Activated B cell treated with CpG ODN at 0.5 μM for 24 hours (primary cell): ENCODE measurements at regions of chr3 and their contacts with region 1.

Region 1: DNA sequence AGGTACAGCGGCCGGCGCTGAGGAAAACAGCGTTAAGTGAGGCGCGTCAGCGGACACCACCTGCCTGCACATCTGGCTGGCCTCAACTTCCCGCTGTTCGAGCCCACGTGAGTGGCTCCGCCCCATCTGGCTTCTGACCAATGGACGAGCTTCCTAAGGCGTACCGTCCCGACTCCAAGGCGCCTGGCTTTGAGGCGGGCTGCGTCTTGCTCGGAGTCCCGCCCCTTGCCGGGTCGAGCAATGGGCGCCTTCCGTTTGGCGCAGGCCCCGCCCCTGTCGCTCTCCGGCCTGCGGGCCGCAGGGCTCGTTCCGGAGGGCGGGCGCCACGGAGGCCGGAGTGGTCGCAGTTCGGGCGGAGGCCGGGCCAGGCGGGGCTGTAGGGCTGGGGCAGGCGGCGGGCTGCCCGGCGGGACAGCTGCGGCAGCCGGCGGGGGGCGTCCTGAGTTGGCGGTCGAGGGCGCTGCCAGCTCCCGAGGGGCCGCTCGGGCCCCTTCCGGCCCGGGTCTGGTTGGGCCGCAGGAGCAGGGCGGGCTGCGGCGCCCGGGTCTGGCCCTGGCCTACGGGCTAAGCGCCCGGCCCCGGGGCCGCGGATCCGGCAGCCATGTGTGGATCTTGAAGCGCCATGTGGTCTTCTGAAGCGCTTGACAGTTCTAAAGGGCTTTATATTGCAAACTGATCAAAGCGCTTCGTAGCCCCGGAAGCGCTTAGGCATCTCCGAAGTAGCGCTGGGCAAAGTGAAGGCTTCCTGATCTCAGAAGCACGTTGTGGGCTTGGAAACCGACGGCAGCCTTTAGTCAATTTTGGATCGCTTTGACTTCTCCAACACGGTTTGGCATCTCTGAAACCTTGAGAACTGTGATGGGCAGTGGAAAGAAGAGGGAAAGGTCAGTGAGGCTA is at the start of gene TATDN2:
- DNase-seq: peak; percentile 88
- ATAC-seq: peak; percentile 97
- H3K4me3 Mint-ChIP-seq: peak within 1 kb of the TSS; percentile 95
- H3K27ac Mint-ChIP-seq: peak within 1 kb of the TSS; percentile 91
- H3K4me1 Mint-ChIP-seq: peaks cover 39% of the 10 kb centered on the region
- H3K27me3 Mint-ChIP-seq: no peaks in the 10 kb centered on the region
- CTCF ChIP-seq: no peak
- total RNA-seq, gene TATDN2: 55.6 and 56.2 TPM in 2 replicates

Region 2: GRCh38 chr3:9792405-9793160 is 455.8 kb before region 1 on chr3 and contains the starts of genes ARPC4 and TADA3:
- CTCF ChIA-PET with region 1: no interaction called
- POLR2A ChIA-PET with region 1: interaction called, 7 read pairs
- intact Hi-C with region 1: loop called (anchors 1 kb)
- DNase-seq: peak; percentile 92
- ATAC-seq: peak; percentile 75
- H3K4me3 Mint-ChIP-seq: peak within 1 kb of the TSS; percentile 99
- H3K27ac Mint-ChIP-seq: peak within 1 kb of the TSS; percentile 100
- H3K4me1 Mint-ChIP-seq: peaks cover 67% of the 10 kb centered on the region
- H3K27me3 Mint-ChIP-seq: no peaks in the 10 kb centered on the region
- CTCF ChIP-seq: no peak
- total RNA-seq, gene ARPC4: 315 and 338 TPM in 2 replicates
- total RNA-seq, gene TADA3: 43.8 and 44.7 TPM in 2 replicates

Region 3: DNA sequence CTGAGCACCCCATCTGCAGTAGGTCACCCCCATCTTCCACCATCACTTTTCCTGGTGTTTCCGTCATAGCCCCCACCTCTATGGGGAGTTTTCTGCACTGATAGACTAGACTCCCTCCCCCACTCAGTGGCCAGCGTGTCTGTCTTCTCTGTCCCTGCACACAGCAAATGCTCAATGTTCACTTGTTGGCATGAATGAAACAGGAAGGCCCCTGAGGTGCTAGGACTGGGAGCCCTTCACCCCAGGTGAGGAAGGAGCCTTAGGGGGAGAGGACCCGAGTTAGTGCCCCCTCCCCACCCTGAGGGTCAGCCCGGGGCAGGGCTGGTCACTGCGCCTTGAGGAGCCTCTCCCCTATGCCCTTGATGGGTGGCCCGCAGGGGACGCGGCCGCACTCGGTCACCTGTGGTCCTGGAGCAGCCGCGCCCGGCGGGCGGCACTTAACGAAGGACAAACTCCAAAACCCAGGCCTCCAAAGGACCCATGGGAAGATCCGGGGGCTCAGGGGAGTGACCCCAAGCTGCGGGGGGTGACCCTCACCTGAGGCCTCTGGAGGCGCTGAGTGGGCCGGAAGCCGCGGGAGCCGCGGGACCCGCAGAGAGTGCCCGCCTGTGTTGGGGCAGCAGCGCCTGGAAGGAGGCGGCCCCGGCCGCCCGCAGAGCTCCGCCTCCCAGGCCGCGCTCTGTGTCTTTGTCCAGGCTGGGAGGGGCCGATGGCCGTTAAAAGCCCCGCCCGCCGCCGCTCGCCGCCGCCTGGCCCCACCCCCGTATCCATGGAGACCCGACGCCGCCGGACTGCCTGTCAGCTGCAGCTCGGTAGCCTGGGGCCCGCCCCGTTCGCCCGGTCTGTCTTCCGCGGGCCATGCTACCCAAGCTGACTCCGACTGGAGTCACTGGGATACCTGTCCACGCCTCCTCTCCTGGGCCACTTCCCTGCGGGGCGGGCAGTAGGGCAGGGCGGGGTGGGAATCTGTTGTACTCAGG is 237.7 kb before region 1 on chr3:
- CTCF ChIA-PET with region 1: no interaction called
- POLR2A ChIA-PET with region 1: interaction called, 3 read pairs
- intact Hi-C with region 1: loop called (anchors 5 kb)
- DNase-seq: peak; percentile 86
- ATAC-seq: peak; percentile 86
- H3K4me3 Mint-ChIP-seq: peak overlapping the region; percentile 65
- H3K27ac Mint-ChIP-seq: peak overlapping the region; percentile 1
- H3K4me1 Mint-ChIP-seq: peaks cover 23% of the 10 kb centered on the region
- H3K27me3 Mint-ChIP-seq: no peaks in the 10 kb centered on the region
- CTCF ChIP-seq: no peak

Region 4: DNA sequence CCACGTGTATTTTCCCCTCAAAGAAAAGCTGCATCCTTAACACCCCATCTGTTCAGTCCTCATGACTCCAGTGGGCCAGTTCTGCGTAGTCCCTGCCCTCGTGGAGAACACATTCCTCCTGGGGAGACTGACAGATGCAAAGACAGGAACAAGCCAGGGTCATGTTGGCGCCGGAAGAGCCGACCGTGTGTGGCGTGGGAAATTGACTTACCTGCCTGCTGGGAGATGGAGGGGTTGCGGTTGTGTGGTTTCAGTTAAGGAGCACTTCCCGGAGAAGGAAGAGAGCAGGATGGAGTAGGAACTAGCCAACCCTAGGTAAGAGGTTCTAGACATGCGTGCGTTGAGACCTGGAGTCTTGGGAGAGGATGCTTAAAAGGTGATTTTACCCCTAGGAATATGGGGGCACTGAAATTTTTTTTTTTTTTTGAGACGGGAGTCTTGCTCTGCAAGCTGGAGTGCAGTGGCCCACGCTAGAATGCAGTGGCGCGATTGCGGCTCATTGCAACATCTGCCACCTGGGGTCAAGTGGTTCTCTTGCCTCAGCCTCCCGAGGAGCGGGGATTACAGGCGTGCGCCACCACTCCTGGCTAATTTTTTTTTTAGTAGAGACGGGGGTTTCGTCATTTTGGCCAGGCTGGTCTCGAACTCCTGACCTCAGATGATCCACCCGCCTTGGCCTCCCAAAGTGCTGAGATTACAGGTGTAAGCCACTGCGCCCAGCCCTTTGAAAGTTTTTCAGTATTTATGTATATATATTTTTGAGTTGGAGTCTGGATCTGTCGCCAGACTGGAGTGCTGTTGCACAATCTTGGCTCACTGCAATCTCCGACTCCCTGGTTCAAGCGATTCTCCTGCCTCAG is 105.5 kb before region 1 on chr3:
- CTCF ChIA-PET with region 1: no interaction called
- POLR2A ChIA-PET with region 1: interaction called, 17 read pairs
- intact Hi-C with region 1: loop called (anchors 1 kb)
- DNase-seq: no peak
- ATAC-seq: no peak
- H3K4me3 Mint-ChIP-seq: peak overlapping the region; percentile 97
- H3K27ac Mint-ChIP-seq: peak overlapping the region; percentile 95
- H3K4me1 Mint-ChIP-seq: peaks cover 42% of the 10 kb centered on the region
- H3K27me3 Mint-ChIP-seq: no peaks in the 10 kb centered on the region
- CTCF ChIP-seq: no peak

Region 5: DNA sequence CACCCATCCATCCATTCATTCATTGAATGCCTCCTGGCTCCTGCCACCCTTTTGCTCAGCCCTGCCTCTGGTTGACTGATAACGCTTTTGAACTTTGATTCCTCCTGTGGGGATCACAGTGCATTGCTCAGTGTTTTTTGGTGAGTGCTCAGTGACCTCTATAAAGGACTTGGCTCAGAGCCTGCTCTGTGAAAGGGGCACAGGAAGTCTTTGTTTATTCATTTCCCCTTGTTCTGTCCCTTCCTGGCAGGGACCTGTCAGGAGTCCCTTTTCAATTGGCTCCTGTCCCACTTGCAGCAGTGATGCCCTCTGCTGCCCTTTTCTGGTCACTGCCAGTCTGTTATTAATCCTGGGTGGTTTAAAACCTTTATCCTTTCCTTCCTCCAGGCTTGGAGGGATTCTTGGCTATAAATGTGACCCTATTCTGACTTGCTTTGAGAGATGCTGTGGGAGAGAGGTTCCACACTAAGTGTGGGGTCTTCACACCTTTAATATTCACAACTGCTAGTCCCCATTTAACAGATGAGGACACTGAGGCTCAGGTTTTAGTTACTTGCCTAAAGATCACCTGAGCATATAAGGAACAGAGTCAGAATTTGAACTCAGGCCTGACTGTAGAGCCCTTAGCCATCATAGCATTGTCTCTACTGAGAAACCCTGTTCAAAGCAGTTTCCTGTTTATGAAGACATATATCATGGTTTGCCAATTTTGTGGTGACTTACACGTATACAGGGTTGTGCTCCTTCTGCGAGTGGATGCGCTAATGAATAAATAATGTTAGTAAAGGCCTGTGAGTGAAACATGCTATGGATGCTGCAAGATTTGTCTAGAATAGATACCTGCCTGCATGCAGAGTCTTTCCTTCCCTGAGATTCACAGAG is 23.4 kb before region 1 on chr3:
- CTCF ChIA-PET with region 1: interaction called, 4 read pairs
- POLR2A ChIA-PET with region 1: interaction called, 12 read pairs
- intact Hi-C with region 1: no loop called
- DNase-seq: peak; percentile 32
- ATAC-seq: peak; percentile 63
- H3K4me3 Mint-ChIP-seq: peak overlapping the region; percentile 48
- H3K27ac Mint-ChIP-seq: peak overlapping the region; percentile 61
- H3K4me1 Mint-ChIP-seq: peaks cover 65% of the 10 kb centered on the region
- H3K27me3 Mint-ChIP-seq: no peaks in the 10 kb centered on the region
- CTCF ChIP-seq: peak; percentile 85

Region 6: GRCh38 chr3:10609134-10609533 is 360.7 kb after region 1 on chr3:
- CTCF ChIA-PET with region 1: no interaction called
- POLR2A ChIA-PET with region 1: no interaction called
- intact Hi-C with region 1: no loop called
- DNase-seq: no peak
- ATAC-seq: no peak
- H3K4me3 Mint-ChIP-seq: no peak overlapping the region
- H3K27ac Mint-ChIP-seq: no peak overlapping the region
- H3K4me1 Mint-ChIP-seq: peaks cover 2% of the 10 kb centered on the region
- H3K27me3 Mint-ChIP-seq: peaks cover 2% of the 10 kb centered on the region
- CTCF ChIP-seq: no peak